Mammary epithelial cell (primary cell): ENCODE measurements at regions of chr17 and their contacts with region 1.

Region 1: DNA sequence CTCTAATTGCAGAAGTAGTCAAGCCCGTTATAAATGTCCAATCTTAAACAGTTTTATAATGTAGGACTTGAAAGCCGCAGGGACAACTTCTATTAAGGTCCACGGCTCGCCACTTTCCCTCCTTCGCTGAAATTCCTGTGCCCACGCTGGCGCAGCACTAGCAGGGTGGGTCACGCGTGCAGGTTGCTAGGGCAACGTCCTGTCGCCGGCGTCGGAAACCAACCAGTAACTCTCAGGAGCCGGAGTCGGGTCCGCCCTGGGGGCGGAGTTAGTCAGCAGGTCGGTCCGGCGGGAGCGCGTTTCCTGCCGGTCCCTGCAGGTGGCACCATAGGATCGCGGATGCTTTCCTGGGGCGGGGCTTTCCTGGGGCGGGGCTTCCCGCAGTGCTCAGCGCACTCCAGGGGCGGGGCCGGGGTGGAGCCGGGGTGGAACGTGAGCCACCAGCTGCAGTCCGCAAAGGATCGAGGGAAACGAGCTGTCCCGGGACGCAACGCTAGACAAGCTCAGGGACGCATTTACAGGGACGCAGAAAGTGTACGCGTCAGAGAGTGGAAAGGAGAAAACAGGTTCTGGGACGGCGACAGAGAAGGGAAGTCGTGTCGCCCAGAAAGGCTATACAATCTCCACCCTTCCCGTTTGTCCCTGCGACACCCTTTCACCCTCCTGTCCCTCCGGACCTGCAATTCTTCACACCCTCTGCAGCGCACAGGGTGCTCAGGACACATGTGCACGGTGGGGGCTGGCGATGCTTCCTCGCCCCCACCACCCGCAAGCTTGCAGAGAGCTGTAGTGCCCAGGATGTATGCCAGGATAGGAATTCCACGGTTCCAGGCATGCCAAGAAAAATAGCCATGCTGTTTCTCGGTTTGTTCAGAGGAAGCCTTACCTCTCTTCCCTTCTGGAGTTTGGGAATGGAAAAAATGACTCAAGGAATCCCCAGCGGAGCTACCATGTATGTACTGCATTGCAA is 12.4 kb downstream of the COPZ2 start:
- DNase-seq: peak; percentile 94
- H3K4me3 ChIP-seq: peak overlapping the region; percentile 47 to 55 (median 52)
- H3K27ac ChIP-seq: peak overlapping the region; percentile 89
- H3K4me1 ChIP-seq: peaks cover 37% of the 10 kb centered on the region
- H3K27me3 ChIP-seq: no peaks in the 10 kb centered on the region
- CTCF ChIP-seq: peak; percentile 67 to 85

Region 2: DNA sequence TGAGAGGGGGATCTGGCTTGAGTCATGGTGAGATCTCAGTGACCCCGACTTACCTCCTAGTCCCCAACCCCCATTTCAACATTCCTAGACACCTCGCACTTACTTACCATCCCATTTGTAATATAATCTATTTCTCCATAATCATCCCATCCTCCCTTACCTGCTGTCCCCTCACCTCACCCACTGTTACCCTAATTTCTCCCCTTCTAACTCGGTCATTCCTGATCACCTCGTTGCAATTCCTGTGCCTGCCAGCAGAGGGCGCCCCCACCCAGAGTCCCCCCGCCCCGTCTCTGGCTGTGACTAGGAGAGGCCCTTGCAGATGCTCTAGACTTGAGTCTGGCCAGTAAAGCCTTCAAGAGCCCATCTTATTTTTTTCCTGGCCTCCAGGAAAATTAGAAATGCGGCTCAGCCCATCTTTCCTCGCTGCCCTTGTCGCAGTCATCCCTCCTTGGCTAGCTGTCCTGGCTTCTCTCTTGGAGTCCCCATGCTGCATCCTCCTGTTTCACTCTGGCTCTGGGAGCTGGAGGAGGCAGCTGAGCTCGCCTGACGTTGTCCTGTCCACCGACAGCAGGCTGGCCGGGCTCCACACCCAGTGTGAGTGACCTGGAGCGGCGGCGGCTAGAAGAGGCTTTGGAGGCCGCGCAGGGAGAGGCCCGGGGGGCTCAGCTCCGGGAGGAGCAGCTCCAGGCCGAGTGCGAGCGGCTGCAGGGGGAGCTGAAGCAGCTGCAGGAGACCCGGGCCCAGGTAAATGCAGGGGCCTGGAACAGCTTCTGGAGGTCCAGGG is 326.3 kb before region 1 on chr17:
- CTCF ChIA-PET with region 1: no interaction called
- dilution Hi-C with region 1: no loop called
- in situ Hi-C with region 1: no loop called
- intact Hi-C with region 1: no loop called
- DNase-seq: peak; percentile 33
- H3K4me3 ChIP-seq: no peak overlapping the region
- H3K27ac ChIP-seq: no peak overlapping the region
- H3K4me1 ChIP-seq: peaks cover 9% of the 10 kb centered on the region
- H3K27me3 ChIP-seq: no peaks in the 10 kb centered on the region
- CTCF ChIP-seq: peak; percentile 62 to 88

Region 3: DNA sequence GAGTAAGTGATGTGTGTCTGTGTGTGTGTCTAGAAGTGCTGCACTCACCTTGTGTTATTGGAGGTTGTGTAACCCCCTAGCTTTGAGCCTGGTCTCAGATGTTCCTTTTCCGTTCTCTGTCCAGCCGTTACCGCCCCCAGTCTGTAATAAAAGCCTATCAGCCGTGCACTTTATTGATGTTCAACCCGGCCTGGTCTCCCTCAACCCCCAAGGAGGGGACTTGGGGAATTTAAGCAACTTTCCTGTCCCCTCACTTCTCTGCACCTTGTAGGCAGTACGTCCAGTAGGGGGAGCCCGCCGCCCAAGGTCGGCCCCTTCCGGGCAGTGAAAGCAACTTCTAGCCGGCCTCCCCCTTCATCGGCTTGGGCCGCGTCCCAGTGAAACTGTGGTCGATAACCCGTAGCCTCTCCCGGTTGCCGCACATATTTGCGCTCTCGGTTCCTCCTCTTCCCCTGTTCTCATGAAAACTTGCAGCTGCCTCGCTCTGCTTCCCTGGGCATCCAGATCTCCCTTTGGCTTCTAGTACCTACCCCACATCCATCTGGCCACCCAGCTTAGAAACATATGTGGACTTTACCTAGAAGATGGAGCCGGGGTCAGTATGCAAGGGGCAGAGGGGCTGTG is 76.0 kb before region 1 on chr17:
- CTCF ChIA-PET with region 1: no interaction called
- dilution Hi-C with region 1: loop called (anchors 5 kb)
- in situ Hi-C with region 1: no loop called
- intact Hi-C with region 1: loop called (anchors 1 kb)
- DNase-seq: peak; percentile 86
- H3K4me3 ChIP-seq: peak overlapping the region in 1 of 3 experiments; percentile 8
- H3K27ac ChIP-seq: peak overlapping the region; percentile 85
- H3K4me1 ChIP-seq: peaks cover 32% of the 10 kb centered on the region
- H3K27me3 ChIP-seq: no peaks in the 10 kb centered on the region
- CTCF ChIP-seq: peak; percentile 83 to 93

Region 4: GRCh38 chr17:48047741-48048383 is 22.6 kb after region 1 on chr17 and contains the start of gene NFE2L1:
- CTCF ChIA-PET with region 1: interaction called, 3 read pairs
- dilution Hi-C with region 1: no loop called
- in situ Hi-C with region 1: no loop called
- intact Hi-C with region 1: loop called (anchors 1 kb)
- DNase-seq: peak; percentile 100
- H3K4me3 ChIP-seq: peak within 1 kb of the TSS; percentile 55 to 87 (median 74)
- H3K27ac ChIP-seq: peak within 1 kb of the TSS; percentile 88
- H3K4me1 ChIP-seq: peaks cover 61% of the 10 kb centered on the region
- H3K27me3 ChIP-seq: no peaks in the 10 kb centered on the region
- CTCF ChIP-seq: no peak
- total RNA-seq, gene NFE2L1: 283 to 291 TPM

Region 5: GRCh38 chr17:48074315-48075081 is 49.3 kb after region 1 on chr17:
- CTCF ChIA-PET with region 1: interaction called, 4 read pairs
- dilution Hi-C with region 1: no loop called
- in situ Hi-C with region 1: loop called in 1 of 2 experiments (anchors 5 kb)
- intact Hi-C with region 1: loop called (anchors 1 kb)
- DNase-seq: peak; percentile 55
- H3K4me3 ChIP-seq: no peak overlapping the region
- H3K27ac ChIP-seq: peak overlapping the region; percentile 46
- H3K4me1 ChIP-seq: peaks cover 7% of the 10 kb centered on the region
- H3K27me3 ChIP-seq: no peaks in the 10 kb centered on the region
- CTCF ChIP-seq: peak; percentile 83 to 85

Region 6: DNA sequence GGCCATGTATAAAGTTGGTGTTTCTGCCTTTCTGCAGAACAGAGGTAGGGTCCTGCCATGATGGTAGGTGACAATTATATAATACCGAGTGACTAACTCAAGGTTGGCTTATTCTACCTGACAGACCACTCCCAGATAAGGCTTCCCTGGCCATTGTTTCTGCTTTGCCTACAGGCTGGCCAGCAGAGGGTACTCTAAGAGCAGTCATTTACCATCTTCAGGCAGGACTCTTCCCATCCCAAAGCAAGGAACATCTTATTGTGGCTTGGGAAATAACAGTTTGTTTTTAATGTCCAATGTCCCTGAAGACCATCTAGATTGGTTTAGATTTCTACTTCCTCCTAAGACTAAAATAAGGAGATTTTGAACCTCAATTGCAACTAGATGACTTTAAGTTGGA is 156.4 kb after region 1 on chr17:
- CTCF ChIA-PET with region 1: no interaction called
- dilution Hi-C with region 1: no loop called
- in situ Hi-C with region 1: no loop called
- intact Hi-C with region 1: loop called (anchors 1 kb)
- DNase-seq: no peak
- H3K4me3 ChIP-seq: no peak overlapping the region
- H3K27ac ChIP-seq: no peak overlapping the region
- H3K4me1 ChIP-seq: no peaks in the 10 kb centered on the region
- H3K27me3 ChIP-seq: no peaks in the 10 kb centered on the region
- CTCF ChIP-seq: peak; percentile 32 to 55

Region 7: DNA sequence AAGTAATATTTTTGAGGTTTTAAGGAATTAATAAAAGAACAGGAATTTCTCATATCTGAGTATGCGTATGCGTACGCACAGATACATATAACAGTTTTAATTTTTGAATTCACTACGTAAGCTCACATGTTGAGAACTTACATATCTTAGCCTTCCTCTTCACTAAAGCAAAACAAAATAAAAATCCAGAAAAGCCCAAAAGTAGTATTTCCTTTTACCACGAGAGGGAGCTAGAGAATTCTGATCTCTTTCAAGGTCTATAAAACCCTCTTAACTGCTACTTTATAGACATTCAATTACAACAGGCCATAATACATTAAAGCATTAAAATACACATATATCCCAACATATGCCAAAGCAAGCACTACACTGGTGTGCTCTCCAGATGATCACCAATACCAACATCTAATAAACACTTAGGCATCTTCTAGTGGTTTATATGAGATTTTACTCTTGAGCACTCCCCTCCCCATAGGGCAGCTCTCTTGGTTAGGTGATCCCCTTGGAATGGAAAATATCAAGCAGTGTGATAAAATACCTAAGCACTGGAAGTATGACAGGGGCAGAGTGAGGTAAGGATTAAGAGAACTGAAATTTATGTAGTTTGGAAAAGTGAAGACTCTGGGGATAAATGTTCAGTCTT is 310.8 kb after region 1 on chr17:
- CTCF ChIA-PET with region 1: no interaction called
- dilution Hi-C with region 1: no loop called
- in situ Hi-C with region 1: no loop called
- intact Hi-C with region 1: loop called (anchors 2 kb)
- DNase-seq: peak; percentile 53
- H3K4me3 ChIP-seq: no peak overlapping the region
- H3K27ac ChIP-seq: no peak overlapping the region
- H3K4me1 ChIP-seq: peaks cover 3% of the 10 kb centered on the region
- H3K27me3 ChIP-seq: peaks cover 13% of the 10 kb centered on the region
- CTCF ChIP-seq: peak; percentile 69 to 71

Region 8: GRCh38 chr17:48618256-48618897 is 593.2 kb after region 1 on chr17:
- CTCF ChIA-PET with region 1: no interaction called
- dilution Hi-C with region 1: no loop called
- in situ Hi-C with region 1: no loop called
- intact Hi-C with region 1: loop called (anchors 2 kb)
- DNase-seq: peak; percentile 77
- H3K4me3 ChIP-seq: no peak overlapping the region
- H3K27ac ChIP-seq: no peak overlapping the region
- H3K4me1 ChIP-seq: peaks cover 4% of the 10 kb centered on the region
- H3K27me3 ChIP-seq: peaks cover 87% of the 10 kb centered on the region
- CTCF ChIP-seq: peak; percentile 87 to 92